Activated B cell treated with CpG ODN at 0.5 μM for 24 hours (primary cell): ENCODE measurements at regions of chr15 and their contacts with region 1.

Region 1: DNA sequence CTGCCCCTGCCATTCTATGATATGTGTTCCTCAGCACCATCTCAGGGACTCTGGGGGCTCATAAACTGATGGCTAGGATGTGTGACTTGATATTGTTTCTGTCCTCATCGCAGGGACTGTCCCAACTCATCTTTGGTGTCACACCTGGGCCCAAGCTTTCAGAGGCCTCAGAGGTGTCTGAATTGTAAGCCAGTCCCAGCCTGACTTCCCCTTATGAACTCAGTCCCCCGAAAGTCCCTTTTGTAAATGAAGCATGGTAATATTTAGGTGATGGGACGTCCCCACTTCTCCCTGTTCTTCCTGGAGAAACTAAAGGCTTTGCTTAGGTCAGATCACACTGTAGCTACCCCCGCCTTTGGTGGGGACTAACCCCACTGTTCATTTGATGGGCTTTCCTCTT is 142.4 kb upstream of the TLE3 start:
- DNase-seq: no peak
- ATAC-seq: peak; percentile 97
- H3K4me3 Mint-ChIP-seq: peak overlapping the region; percentile 39
- H3K27ac Mint-ChIP-seq: peak overlapping the region; percentile 62
- H3K4me1 Mint-ChIP-seq: peaks cover 49% of the 10 kb centered on the region
- H3K27me3 Mint-ChIP-seq: no peaks in the 10 kb centered on the region
- CTCF ChIP-seq: no peak

Region 2: GRCh38 chr15:70036585-70037291 is 203.3 kb before region 1 on chr15:
- CTCF ChIA-PET with region 1: no interaction called
- POLR2A ChIA-PET with region 1: no interaction called
- intact Hi-C with region 1: loop called (anchors 5 kb)
- DNase-seq: no peak
- ATAC-seq: peak; percentile 55
- H3K4me3 Mint-ChIP-seq: peak overlapping the region; percentile 76
- H3K27ac Mint-ChIP-seq: peak overlapping the region; percentile 91
- H3K4me1 Mint-ChIP-seq: peaks cover 67% of the 10 kb centered on the region
- H3K27me3 Mint-ChIP-seq: no peaks in the 10 kb centered on the region
- CTCF ChIP-seq: no peak

Region 3: DNA sequence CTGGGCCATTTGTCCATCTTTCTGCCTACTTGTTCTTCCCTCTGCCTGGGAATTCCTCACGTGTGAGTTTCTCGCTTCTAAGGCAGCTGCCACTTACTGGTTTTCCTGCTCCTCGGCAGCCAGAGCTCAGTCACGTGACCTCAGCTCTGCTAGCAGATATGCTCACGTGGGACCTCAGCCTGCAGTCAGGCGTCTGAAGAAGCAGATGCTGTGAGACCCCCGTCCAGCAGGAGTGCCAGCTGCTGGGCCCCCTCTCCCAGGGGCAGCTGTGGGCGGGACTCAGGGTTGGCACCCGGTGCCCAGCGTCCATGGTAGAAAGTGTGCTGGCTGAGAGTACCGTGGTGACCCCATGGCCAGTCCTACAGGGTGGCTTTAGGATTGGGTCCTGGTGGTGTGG is 18.9 kb after region 1 on chr15:
- CTCF ChIA-PET with region 1: no interaction called
- POLR2A ChIA-PET with region 1: interaction called, 4 read pairs
- intact Hi-C with region 1: loop called (anchors 1 kb)
- DNase-seq: no peak
- ATAC-seq: peak; percentile 40
- H3K4me3 Mint-ChIP-seq: peak overlapping the region; percentile 73
- H3K27ac Mint-ChIP-seq: peak overlapping the region; percentile 53
- H3K4me1 Mint-ChIP-seq: peaks cover 65% of the 10 kb centered on the region
- H3K27me3 Mint-ChIP-seq: no peaks in the 10 kb centered on the region
- CTCF ChIP-seq: no peak

Region 4: DNA sequence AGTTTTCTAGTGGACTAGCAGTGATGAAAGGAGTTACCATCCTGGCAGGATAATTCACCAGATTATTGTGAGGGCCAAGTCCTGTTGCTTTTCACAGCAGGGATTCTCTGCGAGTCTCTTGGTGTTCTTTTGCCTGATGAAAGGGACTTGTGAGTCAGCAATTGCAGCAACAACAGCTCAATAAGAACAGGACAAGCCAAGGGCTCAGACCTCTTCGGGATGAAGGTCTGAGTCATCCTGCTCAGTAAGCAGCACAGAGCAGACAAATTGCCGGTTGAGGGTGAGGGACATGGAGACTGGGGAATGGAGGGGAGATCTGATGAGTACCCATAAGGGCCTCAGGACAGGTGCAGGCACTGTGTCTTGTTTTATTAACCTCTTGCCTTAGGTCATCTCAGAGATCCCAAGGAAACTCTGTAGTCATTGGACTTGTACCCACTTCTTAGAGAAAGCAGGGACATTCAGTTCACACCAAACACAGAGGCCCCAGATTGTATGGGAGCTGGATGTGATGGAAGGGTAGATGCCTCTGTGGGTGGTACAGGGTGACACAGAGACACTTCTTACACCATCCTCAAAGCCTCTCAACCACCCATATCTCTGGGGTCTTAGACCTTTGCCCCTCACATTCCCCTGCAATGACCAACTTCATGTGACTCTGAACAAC is 31.5 kb after region 1 on chr15:
- CTCF ChIA-PET with region 1: no interaction called
- POLR2A ChIA-PET with region 1: interaction called, 10 read pairs
- intact Hi-C with region 1: loop called (anchors 1 kb)
- DNase-seq: no peak
- ATAC-seq: no peak
- H3K4me3 Mint-ChIP-seq: no peak overlapping the region
- H3K27ac Mint-ChIP-seq: no peak overlapping the region
- H3K4me1 Mint-ChIP-seq: peaks cover 57% of the 10 kb centered on the region
- H3K27me3 Mint-ChIP-seq: peaks cover 3% of the 10 kb centered on the region
- CTCF ChIP-seq: no peak

Region 5: DNA sequence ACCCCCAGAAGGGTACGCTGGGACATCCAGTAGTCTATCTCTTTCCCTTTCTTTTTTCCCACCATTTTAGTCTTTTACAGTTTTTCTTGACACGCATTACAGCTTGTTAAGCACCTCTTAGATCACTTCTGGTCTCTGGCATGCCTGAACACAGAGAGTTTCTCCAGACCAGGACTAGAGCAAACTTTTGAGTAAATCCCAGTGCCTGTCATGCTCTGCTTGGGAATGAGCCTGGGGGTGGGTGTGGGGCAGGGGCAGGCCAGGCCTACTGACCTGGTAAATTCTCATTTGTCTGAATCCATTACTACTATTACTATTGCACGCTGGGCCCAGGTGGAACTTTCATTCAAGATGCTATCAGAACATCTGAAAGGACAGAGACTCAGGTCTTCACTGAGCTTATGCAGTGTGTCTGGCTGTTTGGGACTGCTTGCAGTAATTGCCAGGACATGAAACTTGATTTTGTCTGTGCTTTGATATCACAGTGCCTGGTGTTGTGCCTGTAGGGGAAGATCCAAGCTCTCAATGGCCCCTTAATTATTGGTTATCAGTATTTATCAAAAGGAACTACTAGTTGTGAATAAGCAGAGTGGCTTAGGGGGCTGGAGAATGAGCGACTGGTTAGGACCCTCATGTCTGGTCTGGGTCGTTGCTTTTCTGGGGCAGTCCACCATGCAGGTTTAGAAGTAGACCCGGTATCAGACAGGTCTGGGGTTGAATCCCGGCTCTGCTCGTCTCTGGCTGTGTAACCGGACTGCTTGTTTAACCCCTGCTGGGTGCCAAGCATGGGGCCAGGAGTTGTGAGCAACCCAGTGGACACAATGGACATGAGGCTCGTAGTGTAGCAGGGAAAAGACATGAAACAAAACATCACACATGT is 53.7 kb after region 1 on chr15:
- CTCF ChIA-PET with region 1: no interaction called
- POLR2A ChIA-PET with region 1: no interaction called
- intact Hi-C with region 1: no loop called
- DNase-seq: no peak
- ATAC-seq: no peak
- H3K4me3 Mint-ChIP-seq: no peak overlapping the region
- H3K27ac Mint-ChIP-seq: no peak overlapping the region
- H3K4me1 Mint-ChIP-seq: no peaks in the 10 kb centered on the region
- H3K27me3 Mint-ChIP-seq: no peaks in the 10 kb centered on the region
- CTCF ChIP-seq: no peak

Region 6: GRCh38 chr15:70466895-70467529 is 226.9 kb after region 1 on chr15:
- CTCF ChIA-PET with region 1: interaction called, 10 read pairs
- POLR2A ChIA-PET with region 1: no interaction called
- intact Hi-C with region 1: loop called (anchors 5 kb)
- DNase-seq: no peak
- ATAC-seq: peak; percentile 73
- H3K4me3 Mint-ChIP-seq: no peak overlapping the region
- H3K27ac Mint-ChIP-seq: no peak overlapping the region
- H3K4me1 Mint-ChIP-seq: peaks cover 20% of the 10 kb centered on the region
- H3K27me3 Mint-ChIP-seq: peaks cover 3% of the 10 kb centered on the region
- CTCF ChIP-seq: peak; percentile 72